ENCODE measurements at regions of chr1 and their contacts with region 1.

Region 1: GRCh38 chr1:94648225-94649007 is 106.9 kb upstream of the F3 start:
- DNase-seq: peak; percentile 79 to 100
- H3K4me3 ChIP-seq: peak overlapping the region; percentile 32; the same call in 1 of the 2 replicates
- H3K27ac ChIP-seq: peak overlapping the region; percentile 97
- H3K4me1 ChIP-seq: peaks cover 84% of the 10 kb centered on the region
- H3K27me3 ChIP-seq: no peaks in the 10 kb centered on the region
- CTCF ChIP-seq: no peak

Region 2: DNA sequence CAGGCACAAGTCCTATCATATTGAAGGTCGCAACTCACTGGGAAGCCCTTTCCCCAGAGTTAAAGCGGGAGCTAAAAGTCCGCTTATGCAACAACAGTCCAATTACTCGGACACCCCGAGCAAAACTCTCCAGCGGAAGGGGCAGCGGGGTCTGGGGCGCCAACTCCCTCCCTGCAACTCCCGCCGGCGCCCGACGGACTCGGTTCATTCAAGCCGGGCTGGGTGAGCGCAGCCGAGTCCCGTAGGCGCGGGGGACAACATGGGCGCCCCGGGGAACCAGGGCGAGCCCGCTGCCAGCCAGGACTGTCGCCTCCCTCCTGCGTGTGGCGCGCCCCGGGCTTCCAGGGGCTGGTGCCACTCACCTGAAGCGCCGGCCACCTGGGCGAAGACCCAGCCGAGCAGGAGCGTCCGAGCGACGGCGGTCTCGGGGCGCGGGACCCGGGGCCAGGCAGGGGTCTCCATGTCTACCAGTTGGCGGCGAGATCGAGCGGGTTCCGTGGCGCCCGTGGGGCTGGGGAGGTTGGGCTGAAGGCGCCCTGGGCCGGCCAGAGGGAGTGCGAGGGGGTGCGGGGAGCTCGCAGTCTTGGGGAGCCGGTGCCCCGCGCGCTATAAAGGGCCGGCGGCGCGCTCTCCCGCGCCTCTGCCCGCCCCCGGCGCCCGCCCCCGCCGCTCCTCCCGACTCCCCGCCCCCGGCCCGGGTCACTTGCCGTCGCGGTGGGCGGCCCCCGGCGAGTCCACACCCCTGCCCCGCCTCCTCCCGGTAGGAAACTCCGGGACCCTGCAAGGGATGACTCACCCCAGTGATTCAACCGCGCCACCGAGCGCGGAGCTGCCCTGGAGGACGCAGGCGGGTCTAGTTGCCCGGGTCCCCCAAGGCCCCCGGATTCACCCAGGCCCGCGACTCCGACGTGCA is 107.0 kb before region 1 on chr1 and contains the start of gene F3:
- CTCF ChIA-PET with region 1: interaction called, 3 read pairs
- POLR2A ChIA-PET with region 1: interaction called, 11 read pairs
- intact Hi-C with region 1: loop called (anchors 1 kb)
- DNase-seq: peak; percentile 93 to 98
- H3K4me3 ChIP-seq: peak within 1 kb of the TSS; percentile 80
- H3K27ac ChIP-seq: peak within 1 kb of the TSS; percentile 87
- H3K4me1 ChIP-seq: peaks cover 67% of the 10 kb centered on the region
- H3K27me3 ChIP-seq: no peaks in the 10 kb centered on the region
- CTCF ChIP-seq: no peak; the same call in 1 of the 2 replicates
- total RNA-seq, gene F3: 335 and 434 TPM in 2 replicates

Region 3: DNA sequence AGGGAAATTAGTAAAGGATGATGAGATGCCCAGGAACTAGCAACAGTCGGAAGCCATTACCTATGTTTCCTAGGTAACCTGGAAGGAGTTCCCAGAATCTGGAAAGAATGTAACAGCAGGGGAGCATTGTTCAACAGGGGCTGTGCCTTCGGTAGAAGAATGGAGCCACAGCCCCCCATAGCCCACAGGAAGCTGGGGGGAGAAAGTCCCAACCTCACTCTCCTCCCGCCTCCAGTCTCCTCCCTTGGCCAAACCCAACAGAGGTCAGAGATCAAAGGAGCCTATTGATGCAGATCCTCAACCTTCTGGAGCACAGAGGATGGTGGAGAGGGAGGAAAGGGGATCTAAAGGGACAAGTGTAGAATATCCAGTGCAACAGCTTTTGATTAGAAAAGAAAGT is 40.2 kb after region 1 on chr1:
- CTCF ChIA-PET with region 1: no interaction called
- POLR2A ChIA-PET with region 1: no interaction called
- intact Hi-C with region 1: no loop called
- DNase-seq: no peak
- H3K4me3 ChIP-seq: no peak overlapping the region
- H3K27ac ChIP-seq: no peak overlapping the region
- H3K4me1 ChIP-seq: no peaks in the 10 kb centered on the region
- H3K27me3 ChIP-seq: no peaks in the 10 kb centered on the region
- CTCF ChIP-seq: no peak

Region 4: GRCh38 chr1:94713472-94714141 is 65.2 kb after region 1 on chr1:
- CTCF ChIA-PET with region 1: no interaction called
- POLR2A ChIA-PET with region 1: interaction called, 3 read pairs
- intact Hi-C with region 1: loop called (anchors 5 kb)
- DNase-seq: peak; percentile 86 to 99
- H3K4me3 ChIP-seq: 0 out of 2 replicates have a peak overlapping the region, but pooled peaks have one; percentile 9
- H3K27ac ChIP-seq: peak overlapping the region; percentile 79
- H3K4me1 ChIP-seq: peaks cover 23% of the 10 kb centered on the region
- H3K27me3 ChIP-seq: no peaks in the 10 kb centered on the region
- CTCF ChIP-seq: no peak

Region 5: GRCh38 chr1:94773931-94774422 is 125.6 kb after region 1 on chr1:
- CTCF ChIA-PET with region 1: no interaction called
- POLR2A ChIA-PET with region 1: interaction called, 3 read pairs
- intact Hi-C with region 1: loop called (anchors 1 kb)
- DNase-seq: peak; percentile 48 to 92
- H3K4me3 ChIP-seq: no peak overlapping the region
- H3K27ac ChIP-seq: peak overlapping the region; percentile 85
- H3K4me1 ChIP-seq: peaks cover 69% of the 10 kb centered on the region
- H3K27me3 ChIP-seq: no peaks in the 10 kb centered on the region
- CTCF ChIP-seq: no peak

Region 6: DNA sequence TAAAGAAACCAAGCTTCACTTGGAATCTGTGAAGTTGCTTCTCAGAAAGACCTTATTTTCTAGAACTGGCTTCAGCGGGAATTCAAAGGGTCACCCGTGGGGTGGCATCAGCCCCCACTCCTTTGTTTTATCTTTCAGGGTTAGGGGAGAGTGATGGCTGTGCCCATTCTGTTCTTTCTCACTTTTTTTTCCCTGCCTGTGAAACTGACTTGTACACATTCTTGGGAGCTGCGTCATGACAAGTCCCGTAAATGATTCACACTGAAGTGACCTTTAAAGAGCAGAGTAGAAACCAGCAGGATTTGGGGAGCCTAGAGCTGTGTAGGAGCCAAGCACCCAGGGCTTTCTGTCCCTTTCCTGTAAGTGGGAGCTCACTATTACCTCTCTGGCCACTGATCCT is 215.5 kb after region 1 on chr1:
- CTCF ChIA-PET with region 1: no interaction called
- POLR2A ChIA-PET with region 1: interaction called, 3 read pairs
- intact Hi-C with region 1: loop called (anchors 2 kb)
- DNase-seq: peak; percentile 65 to 96
- H3K4me3 ChIP-seq: peak overlapping the region; percentile 36
- H3K27ac ChIP-seq: peak overlapping the region; percentile 96
- H3K4me1 ChIP-seq: peaks cover 50% of the 10 kb centered on the region
- H3K27me3 ChIP-seq: no peaks in the 10 kb centered on the region
- CTCF ChIP-seq: no peak